Dorsolateral prefrontal cortex (tissue), 120 donors: ENCODE measurements at regions of chr5 and their contacts with region 1.

Region 1: DNA sequence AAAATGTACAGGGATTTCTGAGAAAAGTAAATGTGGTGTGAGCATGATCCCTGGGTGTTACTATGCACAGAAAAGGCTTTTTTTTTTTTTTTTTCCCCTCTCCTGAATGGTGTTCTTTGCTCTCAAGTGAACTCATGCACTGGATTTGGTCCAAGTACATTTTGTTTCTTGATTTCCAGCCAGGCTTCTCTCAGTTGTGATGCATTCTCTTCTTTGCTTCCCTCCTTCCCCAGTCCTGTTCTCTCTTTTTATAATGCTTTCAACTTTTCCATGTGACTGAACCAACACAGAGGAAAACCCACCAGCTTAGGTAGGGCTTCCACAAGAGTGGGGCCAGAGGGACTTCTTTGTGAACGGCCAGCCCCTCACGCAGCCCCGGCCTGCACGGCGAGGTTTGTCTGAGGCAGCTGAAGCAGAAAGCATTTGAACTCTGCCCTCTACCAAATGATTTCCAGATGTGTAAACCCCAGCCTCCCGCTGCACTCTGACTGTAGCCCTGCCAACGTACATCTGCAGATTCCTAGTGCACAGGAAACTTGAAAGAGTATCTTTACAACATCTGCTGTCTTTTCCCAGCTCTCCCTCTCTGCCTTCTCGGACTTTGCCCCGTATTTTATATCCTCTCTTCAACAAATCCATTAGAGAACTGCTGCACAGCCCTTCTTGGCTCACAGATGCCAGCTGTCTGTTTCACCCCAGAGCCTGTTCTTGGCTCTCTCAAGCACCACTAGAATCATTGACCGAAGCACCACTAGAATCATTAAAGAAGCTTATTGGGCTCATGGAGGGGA is 71.8 kb upstream of the CD180 start:
- DNase-seq: peak; percentile 44 to 81 (median 64)
- H3K4me3 ChIP-seq: peak overlapping the region in 43 of 59 donors; percentile 4 to 50 (median 23)
- H3K27ac ChIP-seq: peak overlapping the region; percentile 88 to 100 (median 99)
- H3K27me3 ChIP-seq: no peaks in the 10 kb centered on the region
- CTCF ChIP-seq: peak in 6 of 56 donors; percentile 4 to 39 (median 15)

Region 2: DNA sequence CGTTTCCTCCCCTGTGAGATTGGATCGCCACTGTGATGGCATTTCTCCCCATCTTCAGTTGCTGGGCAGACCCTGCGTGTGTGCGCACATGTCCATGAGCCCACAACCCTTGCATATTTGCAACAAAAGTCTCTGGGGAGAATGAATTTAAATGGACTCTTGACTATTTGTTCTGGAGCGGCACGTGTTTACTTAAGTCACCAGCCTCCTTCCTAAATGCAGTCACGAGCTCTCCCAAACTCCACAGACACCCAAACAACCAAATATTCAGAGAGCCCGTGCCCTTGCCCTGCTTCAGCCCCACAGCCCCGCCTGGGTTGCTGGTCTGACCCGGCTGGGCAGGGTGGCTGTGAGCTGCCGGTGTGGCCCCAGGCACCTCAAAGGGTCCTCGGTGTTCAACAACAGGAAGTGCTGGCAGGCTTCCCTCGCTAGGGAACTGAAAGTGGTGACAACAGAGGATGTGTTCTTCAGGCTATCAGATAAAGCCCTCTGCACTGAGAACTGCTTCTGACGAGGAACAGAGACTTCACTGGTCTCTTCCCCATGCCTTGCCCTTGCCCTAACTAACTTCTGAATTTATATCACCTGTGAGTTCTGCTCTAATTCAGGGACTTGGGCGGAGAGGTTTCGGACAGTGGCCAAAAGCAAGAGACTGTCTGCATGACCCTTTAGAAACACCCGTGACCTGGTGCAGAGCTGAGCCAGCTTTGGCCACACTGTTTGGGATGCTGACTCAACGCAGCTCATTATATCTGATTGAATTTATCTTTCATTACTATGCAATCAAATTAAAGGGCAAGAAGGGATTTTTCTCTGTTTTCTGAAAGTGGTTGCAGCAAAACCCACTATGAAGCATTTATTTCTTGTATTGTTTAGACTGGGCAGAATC is 52.6 kb before region 1 on chr5:
- intact Hi-C with region 1: no loop called
- DNase-seq: peak in 6 of 10 donors; percentile 44 to 65 (median 60)
- H3K4me3 ChIP-seq: peak overlapping the region in 43 of 59 donors; percentile 3 to 48 (median 34)
- H3K27ac ChIP-seq: peak overlapping the region in 36 of 59 donors; percentile 5 to 81 (median 38)
- H3K27me3 ChIP-seq: no peaks in the 10 kb centered on the region
- CTCF ChIP-seq: peak in 1 of 56 donors; percentile 10

Region 3: DNA sequence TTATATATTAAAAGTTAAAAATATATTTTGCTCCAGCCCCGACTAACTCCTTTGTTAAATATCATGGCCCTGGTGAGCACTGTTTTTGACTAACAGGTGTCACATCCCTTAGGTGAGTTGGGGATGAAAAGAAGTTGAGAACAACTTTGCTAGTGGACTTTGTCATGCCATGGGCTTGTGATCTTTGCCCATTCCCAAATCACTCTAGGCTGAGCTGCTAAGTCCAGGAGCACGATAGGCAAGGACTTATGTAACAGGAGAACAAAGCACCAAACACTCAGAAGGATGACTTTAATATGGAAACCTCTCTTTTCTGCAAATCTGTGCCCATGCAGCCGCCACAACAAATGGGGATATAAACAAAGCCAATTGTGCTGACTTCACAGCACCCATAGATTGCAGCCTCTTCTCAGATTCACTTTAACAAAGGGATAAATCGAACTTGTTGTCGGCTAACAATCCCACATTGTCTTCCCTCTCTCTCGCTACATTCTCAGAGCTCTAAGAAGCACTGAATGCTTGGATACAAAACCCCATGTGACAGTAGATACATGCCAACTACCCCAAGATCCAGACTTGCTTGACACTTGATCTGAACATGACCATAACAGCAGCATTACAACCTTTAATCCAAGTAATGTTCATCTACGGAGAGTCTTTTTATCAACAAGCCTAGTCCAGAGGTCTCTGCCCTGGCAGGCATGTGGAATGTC is 15.0 kb after region 1 on chr5:
- intact Hi-C with region 1: loop called (anchors 1 to 2 kb)
- DNase-seq: peak in 6 of 10 donors; percentile 41 to 79 (median 64)
- H3K4me3 ChIP-seq: no peak overlapping the region
- H3K27ac ChIP-seq: peak overlapping the region; percentile 80 to 99 (median 95)
- H3K27me3 ChIP-seq: no peaks in the 10 kb centered on the region
- CTCF ChIP-seq: peak in 1 of 56 donors; percentile 15

Region 4: DNA sequence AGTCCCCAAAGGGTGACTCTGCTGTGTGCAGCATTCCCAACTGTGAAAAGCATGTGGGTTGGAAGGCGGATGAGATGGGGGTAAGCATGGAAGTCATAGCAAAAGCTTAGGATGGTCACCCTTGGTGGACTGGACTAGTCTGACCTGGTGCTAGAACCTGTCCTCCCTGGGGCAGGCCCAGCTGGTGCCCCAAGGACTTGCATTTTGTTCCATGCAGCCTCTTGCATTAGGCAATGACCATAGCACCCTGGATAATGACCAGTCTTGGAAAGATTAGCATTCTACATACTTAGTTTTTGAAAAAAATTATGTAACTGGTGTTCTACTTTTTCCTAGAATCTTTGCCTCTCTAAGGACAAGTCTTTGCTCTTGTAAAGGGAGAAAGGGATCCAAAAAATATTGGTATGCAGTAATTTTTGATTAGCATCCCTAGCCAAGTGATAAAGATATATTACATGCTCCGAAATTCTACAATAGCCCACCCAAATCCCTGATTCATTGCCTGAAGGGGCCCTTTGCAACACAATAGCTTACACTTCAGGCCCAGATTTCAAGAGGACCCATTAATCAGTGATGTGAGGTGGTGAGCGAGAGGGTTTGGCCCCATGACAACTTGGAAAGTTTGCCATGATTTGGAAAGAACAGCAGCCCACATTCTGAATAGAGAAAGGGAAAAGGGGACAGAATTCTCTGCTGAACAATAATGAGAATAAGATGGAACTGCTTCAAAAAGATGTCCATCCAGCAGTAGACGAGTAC is 21.5 kb after region 1 on chr5:
- intact Hi-C with region 1: loop called in 1 of 2 experiments (anchors 2 kb)
- DNase-seq: no peak
- H3K4me3 ChIP-seq: no peak overlapping the region
- H3K27ac ChIP-seq: peak overlapping the region; percentile 50 to 99 (median 95)
- H3K27me3 ChIP-seq: no peaks in the 10 kb centered on the region
- CTCF ChIP-seq: no peak

Region 5: GRCh38 chr5:67963789-67964519 is 695.5 kb after region 1 on chr5:
- intact Hi-C with region 1: no loop called
- DNase-seq: no peak
- H3K4me3 ChIP-seq: no peak overlapping the region
- H3K27ac ChIP-seq: no peak overlapping the region
- H3K27me3 ChIP-seq: no peaks in the 10 kb centered on the region
- CTCF ChIP-seq: no peak